Naive thymus-derived CD4-positive, alpha-beta T cell (primary cell): ENCODE measurements at regions of chr4 and their contacts with region 1.

Region 1: DNA sequence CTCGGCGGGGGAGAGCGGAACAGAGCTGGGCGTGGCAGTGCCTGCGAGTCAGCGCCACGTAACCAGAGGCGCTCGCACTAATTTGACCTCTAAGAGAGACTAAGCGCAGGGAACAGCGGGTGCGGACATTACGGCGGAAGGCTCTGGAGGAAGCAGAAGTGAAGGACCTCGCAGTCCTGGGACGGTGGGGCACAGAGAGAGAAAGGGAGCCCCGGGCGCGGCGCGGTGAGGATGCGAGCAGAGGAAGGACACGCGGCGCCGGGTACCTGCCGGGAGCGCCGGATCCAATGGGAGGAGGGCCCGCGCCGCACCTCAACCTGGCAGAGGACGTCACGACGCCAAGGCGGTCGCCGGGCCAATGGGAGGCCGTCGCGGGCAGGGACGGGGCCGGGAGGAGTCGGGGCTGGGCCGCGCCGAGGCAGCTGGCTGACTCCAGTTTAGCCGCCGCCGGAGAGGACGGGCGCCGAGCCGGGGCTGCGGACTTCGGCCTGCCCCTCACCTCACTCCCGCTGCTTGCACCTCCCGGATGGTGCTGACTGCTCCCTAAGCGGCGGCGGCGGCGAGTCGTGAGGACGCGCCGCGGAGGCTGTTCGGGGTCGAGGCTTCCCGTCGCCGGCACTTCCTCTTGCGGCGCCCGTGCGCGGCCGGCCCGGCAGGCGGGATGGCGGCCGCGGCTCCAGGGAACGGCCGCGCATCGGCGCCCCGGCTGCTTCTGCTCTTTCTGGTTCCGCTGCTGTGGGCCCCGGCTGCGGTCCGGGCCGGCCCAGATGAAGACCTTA is at the start of gene TMEM165:
- DNase-seq: peak; percentile 77 to 92 (median 87)
- ATAC-seq: peak; percentile 94
- H3K4me3 ChIP-seq: peak within 1 kb of the TSS; percentile 88
- H3K4me3 Mint-ChIP-seq: peak within 1 kb of the TSS; percentile 94 to 99 (median 96)
- H3K27ac ChIP-seq: peak within 1 kb of the TSS; percentile 89
- H3K27ac Mint-ChIP-seq: peak within 1 kb of the TSS; percentile 89 to 99 (median 96)
- H3K4me1 ChIP-seq: peaks cover 27 to 31% of the 10 kb centered on the region in 2 donors
- H3K4me1 Mint-ChIP-seq: peaks cover 29 to 49% (median 39%) of the 10 kb centered on the region in 7 donors
- H3K27me3 ChIP-seq: no peaks in the 10 kb centered on the region
- H3K27me3 Mint-ChIP-seq: no peaks in the 10 kb centered on the region
- total RNA-seq, gene TMEM165: 53.1 to 80.9 (median 58.9) TPM

Region 2: GRCh38 chr4:54322818-54323417 is 1072.8 kb before region 1 on chr4:
- CTCF ChIA-PET with region 1: no interaction called
- POLR2A ChIA-PET with region 1: no interaction called
- intact Hi-C with region 1: loop called in 1 of 2 experiments (anchors 5 kb)
- DNase-seq: peak in 8 of 9 donors; percentile 8 to 52 (median 42)
- ATAC-seq: peak; percentile 54
- H3K4me3 ChIP-seq: no peak overlapping the region
- H3K4me3 Mint-ChIP-seq: no peak overlapping the region
- H3K27ac ChIP-seq: no peak overlapping the region
- H3K27ac Mint-ChIP-seq: no peak overlapping the region
- H3K4me1 ChIP-seq: no peaks in the 10 kb centered on the region
- H3K4me1 Mint-ChIP-seq: peaks cover 0 to 12% (median 0%) of the 10 kb centered on the region in 7 donors
- H3K27me3 ChIP-seq: no peaks in the 10 kb centered on the region
- H3K27me3 Mint-ChIP-seq: peaks cover 0 to 3% (median 0%) of the 10 kb centered on the region in 5 donors

Region 3: DNA sequence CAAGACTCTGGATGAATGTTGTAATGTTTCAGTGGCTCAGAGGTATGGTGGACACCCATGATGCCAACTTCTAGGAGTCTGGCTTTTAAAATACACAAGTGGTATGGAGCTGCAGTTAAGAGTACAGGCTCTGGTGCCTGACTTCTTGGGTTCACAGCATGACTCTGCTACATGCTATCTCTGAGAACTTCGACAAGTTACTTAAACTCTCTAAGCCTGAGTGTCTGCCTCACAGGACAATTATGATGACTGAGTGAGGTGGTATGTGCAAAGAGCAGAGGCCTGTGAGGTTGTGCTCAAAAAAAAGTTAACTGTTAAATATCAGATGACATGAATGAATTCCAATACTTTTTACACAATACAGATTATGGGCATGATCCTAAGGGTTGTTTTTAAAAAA is 140.5 kb before region 1 on chr4:
- CTCF ChIA-PET with region 1: no interaction called
- POLR2A ChIA-PET with region 1: no interaction called
- intact Hi-C with region 1: no loop called
- DNase-seq: no peak
- ATAC-seq: no peak
- H3K4me3 ChIP-seq: no peak overlapping the region
- H3K4me3 Mint-ChIP-seq: no peak overlapping the region
- H3K27ac ChIP-seq: no peak overlapping the region
- H3K27ac Mint-ChIP-seq: no peak overlapping the region
- H3K4me1 ChIP-seq: no peaks in the 10 kb centered on the region
- H3K4me1 Mint-ChIP-seq: no peaks in the 10 kb centered on the region
- H3K27me3 ChIP-seq: no peaks in the 10 kb centered on the region
- H3K27me3 Mint-ChIP-seq: peaks cover 5 to 22% (median 12%) of the 10 kb centered on the region in 5 donors

Region 4: GRCh38 chr4:55409468-55410171 is 13.9 kb after region 1 on chr4:
- CTCF ChIA-PET with region 1: interaction called, 5 read pairs
- POLR2A ChIA-PET with region 1: interaction called, 3 read pairs
- intact Hi-C with region 1: loop called in 1 of 2 experiments (anchors 2 kb)
- DNase-seq: peak in 3 of 9 donors; percentile 9 to 19 (median 14)
- ATAC-seq: peak; percentile 44
- H3K4me3 ChIP-seq: no peak overlapping the region
- H3K4me3 Mint-ChIP-seq: no peak overlapping the region
- H3K27ac ChIP-seq: no peak overlapping the region
- H3K27ac Mint-ChIP-seq: peak overlapping the region in 6 of 9 donors; percentile 10 to 68 (median 48)
- H3K4me1 ChIP-seq: peaks cover 0 to 4% of the 10 kb centered on the region in 2 donors
- H3K4me1 Mint-ChIP-seq: peaks cover 29 to 50% (median 40%) of the 10 kb centered on the region in 7 donors
- H3K27me3 ChIP-seq: no peaks in the 10 kb centered on the region
- H3K27me3 Mint-ChIP-seq: no peaks in the 10 kb centered on the region

Region 5: DNA sequence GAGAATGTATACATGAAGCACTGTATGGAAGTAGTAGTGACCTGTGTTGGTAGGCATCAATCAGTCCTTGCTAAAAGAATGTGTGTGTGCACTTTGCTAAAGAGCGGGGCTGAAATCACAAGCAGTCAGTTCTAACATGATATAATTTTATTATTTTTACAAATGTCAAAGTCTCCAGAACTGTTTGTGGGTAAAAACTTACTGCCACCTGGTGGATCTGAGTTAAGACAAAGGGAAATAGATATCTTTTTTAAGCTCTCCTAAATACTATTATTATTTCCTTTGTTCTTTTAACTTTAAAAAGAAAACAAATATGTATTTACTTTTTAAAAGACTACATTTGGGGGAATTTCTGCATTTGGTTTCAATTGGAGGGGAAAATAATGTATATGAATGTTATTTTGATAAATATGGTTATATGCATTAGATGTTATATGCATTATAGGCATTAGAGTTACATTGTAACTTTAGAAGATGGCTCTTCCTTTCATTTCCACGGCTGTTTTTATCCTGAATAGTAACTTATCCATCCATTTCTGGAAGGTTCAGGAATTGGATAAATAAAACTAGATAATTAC is 158.8 kb after region 1 on chr4:
- CTCF ChIA-PET with region 1: no interaction called
- POLR2A ChIA-PET with region 1: no interaction called
- intact Hi-C with region 1: loop called in 1 of 2 experiments (anchors 1 kb)
- DNase-seq: peak in 5 of 9 donors; percentile 10 to 46 (median 36)
- ATAC-seq: peak; percentile 48
- H3K4me3 ChIP-seq: no peak overlapping the region
- H3K4me3 Mint-ChIP-seq: no peak overlapping the region
- H3K27ac ChIP-seq: no peak overlapping the region
- H3K27ac Mint-ChIP-seq: no peak overlapping the region
- H3K4me1 ChIP-seq: no peaks in the 10 kb centered on the region
- H3K4me1 Mint-ChIP-seq: peaks cover 0 to 10% (median 6%) of the 10 kb centered on the region in 7 donors
- H3K27me3 ChIP-seq: no peaks in the 10 kb centered on the region
- H3K27me3 Mint-ChIP-seq: peaks cover 0 to 15% (median 11%) of the 10 kb centered on the region in 5 donors

Region 6: DNA sequence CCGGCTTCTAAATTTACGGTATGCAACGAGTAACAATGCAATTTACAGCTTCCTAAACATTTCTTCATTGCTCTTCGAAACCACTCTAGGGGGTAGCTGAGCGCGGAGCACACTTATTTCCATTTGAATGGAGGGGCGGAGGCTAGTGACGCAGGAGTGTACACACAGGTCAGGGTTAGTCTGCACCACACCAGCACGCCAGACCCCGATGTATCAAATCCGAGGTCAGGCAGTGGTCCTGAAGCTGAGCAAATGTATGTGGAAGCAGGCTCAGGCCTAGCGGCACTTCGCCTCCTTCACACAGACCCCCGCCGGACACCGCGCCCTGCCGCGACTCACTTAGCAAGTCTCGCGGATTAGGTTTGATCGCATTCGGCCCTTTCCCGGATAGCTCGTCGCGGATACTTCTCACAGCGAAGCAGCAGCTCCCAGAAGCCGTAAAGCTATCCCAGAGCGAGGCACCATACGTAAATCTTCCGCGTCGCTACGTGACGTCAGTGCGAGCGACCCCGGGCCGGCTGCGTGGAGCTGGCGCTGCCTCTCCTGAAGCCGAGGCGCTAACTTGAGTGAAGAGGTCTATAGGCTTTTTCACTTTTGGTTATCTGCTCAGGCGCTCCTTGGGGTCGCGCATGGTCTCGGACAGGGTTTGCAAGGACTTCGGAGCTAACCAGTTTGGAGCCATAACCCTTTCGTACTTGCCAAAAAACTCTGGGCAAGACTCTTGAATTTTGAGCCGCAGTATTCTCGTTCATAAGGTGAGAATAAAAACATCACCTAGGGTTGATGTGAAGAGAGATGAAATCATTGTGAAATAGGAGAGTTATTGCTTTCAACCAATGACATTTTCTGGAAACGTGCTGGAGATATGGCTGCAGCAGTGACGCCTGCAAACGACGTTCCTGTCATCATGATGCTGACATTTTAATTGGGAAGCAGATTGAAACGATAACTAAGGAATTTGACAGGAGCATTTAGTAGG is 991.6 kb after region 1 on chr4 and contains the start of gene AASDH:
- CTCF ChIA-PET with region 1: no interaction called
- POLR2A ChIA-PET with region 1: interaction called, 3 read pairs
- intact Hi-C with region 1: loop called (anchors 1 to 5 kb)
- DNase-seq: peak; percentile 92 to 98 (median 94)
- ATAC-seq: peak; percentile 95
- H3K4me3 ChIP-seq: peak within 1 kb of the TSS; percentile 94
- H3K4me3 Mint-ChIP-seq: peak within 1 kb of the TSS; percentile 87 to 99 (median 96)
- H3K27ac ChIP-seq: peak within 1 kb of the TSS; percentile 92
- H3K27ac Mint-ChIP-seq: peak within 1 kb of the TSS; percentile 97 to 100 (median 98)
- H3K4me1 ChIP-seq: peaks cover 15 to 18% of the 10 kb centered on the region in 2 donors
- H3K4me1 Mint-ChIP-seq: peaks cover 19 to 60% (median 47%) of the 10 kb centered on the region in 7 donors
- H3K27me3 ChIP-seq: no peaks in the 10 kb centered on the region
- H3K27me3 Mint-ChIP-seq: no peaks in the 10 kb centered on the region
- total RNA-seq, gene AASDH: 10.2 to 24.7 (median 15.8) TPM